Activated B cell treated with CpG ODN at 0.5 μM for 24 hours (primary cell): ENCODE measurements at regions of chr11 and their contacts with region 1.

Region 1: GRCh38 chr11:126268708-126269579 is at the starts of genes FOXRED1 and SRPRA:
- DNase-seq: peak; percentile 99
- ATAC-seq: peak; percentile 98
- H3K4me3 Mint-ChIP-seq: peak within 1 kb of the TSS; percentile 95
- H3K27ac Mint-ChIP-seq: peak within 1 kb of the TSS; percentile 95
- H3K4me1 Mint-ChIP-seq: peaks cover 33% of the 10 kb centered on the region
- H3K27me3 Mint-ChIP-seq: no peaks in the 10 kb centered on the region
- CTCF ChIP-seq: no peak
- total RNA-seq, gene FOXRED1: 39.1 and 44.9 TPM in 2 replicates
- total RNA-seq, gene SRPRA: 121 and 128 TPM in 2 replicates

Region 2: DNA sequence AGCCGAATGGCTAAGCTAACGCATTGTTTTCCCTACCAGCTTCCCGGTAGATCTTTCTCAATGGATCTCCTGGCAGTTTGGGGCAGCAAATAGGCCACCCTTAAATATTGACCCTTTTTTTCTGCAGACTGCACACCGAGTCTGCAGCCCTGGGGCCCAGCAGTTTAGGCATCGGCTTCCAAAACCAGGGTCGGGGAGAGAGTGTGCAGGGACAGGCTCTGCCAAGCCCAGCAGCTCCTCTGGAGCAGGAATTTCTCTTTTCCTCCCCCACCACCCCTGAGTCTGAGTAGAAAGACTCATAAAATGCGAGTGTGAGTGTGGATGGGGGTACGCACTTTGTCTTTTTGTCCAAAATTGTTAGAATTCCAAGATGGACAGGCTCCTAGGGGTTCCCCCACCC is 886.1 kb before region 1 on chr11:
- CTCF ChIA-PET with region 1: no interaction called
- POLR2A ChIA-PET with region 1: interaction called, 11 read pairs
- intact Hi-C with region 1: no loop called
- DNase-seq: no peak
- ATAC-seq: no peak
- H3K4me3 Mint-ChIP-seq: no peak overlapping the region
- H3K27ac Mint-ChIP-seq: no peak overlapping the region
- H3K4me1 Mint-ChIP-seq: no peaks in the 10 kb centered on the region
- H3K27me3 Mint-ChIP-seq: peaks cover 6% of the 10 kb centered on the region
- CTCF ChIP-seq: no peak

Region 3: DNA sequence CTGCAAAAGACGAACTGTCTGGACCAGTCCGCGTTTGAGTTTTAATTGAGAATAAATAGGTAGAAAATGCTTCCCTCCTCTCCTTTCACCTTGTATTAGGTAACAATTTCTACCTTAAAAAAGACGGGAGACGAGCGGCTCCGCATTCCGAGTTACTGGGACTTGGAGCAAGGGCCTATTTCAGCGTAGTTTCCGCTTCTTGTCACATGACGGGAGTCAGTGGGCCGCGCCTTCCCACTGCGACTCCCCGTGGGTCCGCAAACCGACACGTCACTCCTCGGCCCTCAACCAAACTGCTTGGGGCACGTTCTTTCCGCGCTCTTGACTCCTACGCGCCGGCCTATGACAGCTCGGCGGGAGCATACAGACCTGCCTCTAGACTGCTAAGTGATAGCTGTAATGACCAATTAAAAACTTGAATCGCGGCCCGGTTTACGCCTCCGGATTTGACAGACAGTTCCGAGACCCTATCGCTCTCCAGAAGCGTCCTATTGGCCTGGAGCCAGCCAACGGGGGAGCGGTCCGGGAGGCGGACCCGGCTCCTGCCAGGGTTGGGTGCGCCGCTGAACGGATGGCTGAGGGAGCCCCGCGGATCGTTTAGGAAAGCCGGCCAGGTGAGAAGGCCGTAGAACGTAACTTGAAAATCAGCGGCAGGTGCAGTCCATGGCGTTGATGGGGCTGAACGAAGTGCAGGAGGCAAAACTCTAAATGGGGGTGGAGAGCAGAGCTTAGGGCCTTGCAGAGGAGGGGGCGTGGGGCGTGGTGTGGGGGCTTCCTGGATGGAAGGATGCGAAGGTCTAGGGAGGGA is 676.4 kb before region 1 on chr11 and contains the start of gene STT3A:
- CTCF ChIA-PET with region 1: no interaction called
- POLR2A ChIA-PET with region 1: interaction called, 5 read pairs
- intact Hi-C with region 1: loop called (anchors 1 kb)
- DNase-seq: peak; percentile 90
- ATAC-seq: peak; percentile 92
- H3K4me3 Mint-ChIP-seq: peak within 1 kb of the TSS; percentile 95
- H3K27ac Mint-ChIP-seq: peak within 1 kb of the TSS; percentile 99
- H3K4me1 Mint-ChIP-seq: peaks cover 58% of the 10 kb centered on the region
- H3K27me3 Mint-ChIP-seq: no peaks in the 10 kb centered on the region
- CTCF ChIP-seq: no peak
- total RNA-seq, gene STT3A: 79.4 and 86.5 TPM in 2 replicates

Region 4: GRCh38 chr11:125902927-125903710 is 365.8 kb before region 1 on chr11 and contains the start of gene PUS3:
- CTCF ChIA-PET with region 1: no interaction called
- POLR2A ChIA-PET with region 1: no interaction called
- intact Hi-C with region 1: loop called (anchors 2 kb)
- DNase-seq: peak; percentile 77
- ATAC-seq: peak; percentile 96
- H3K4me3 Mint-ChIP-seq: peak within 1 kb of the TSS; percentile 94
- H3K27ac Mint-ChIP-seq: peak within 1 kb of the TSS; percentile 88
- H3K4me1 Mint-ChIP-seq: peaks cover 31% of the 10 kb centered on the region
- H3K27me3 Mint-ChIP-seq: peaks cover 22% of the 10 kb centered on the region
- CTCF ChIP-seq: no peak
- total RNA-seq, gene PUS3: 10.2 and 13.2 TPM in 2 replicates

Region 5: DNA sequence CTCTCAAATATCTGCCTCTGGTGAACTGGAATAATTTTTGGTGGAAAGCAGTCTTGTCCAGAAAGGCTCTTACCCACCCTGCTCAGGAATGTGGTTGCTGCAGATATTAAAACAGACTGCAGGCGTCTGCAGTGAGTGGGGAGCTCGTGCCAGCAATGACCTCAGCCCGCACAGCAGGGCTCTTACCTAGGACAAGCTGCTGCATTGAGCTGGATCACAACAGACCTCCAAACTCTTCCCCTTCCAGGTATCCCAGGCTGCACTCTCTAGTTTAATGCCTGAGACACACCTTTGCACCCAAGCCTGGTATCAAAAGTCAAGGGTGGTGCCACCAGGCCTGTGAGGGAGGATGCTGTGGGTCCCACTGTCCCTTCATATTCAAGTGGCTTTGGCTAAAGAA is 136.6 kb before region 1 on chr11:
- CTCF ChIA-PET with region 1: no interaction called
- POLR2A ChIA-PET with region 1: no interaction called
- intact Hi-C with region 1: no loop called
- DNase-seq: no peak
- ATAC-seq: no peak
- H3K4me3 Mint-ChIP-seq: no peak overlapping the region
- H3K27ac Mint-ChIP-seq: no peak overlapping the region
- H3K4me1 Mint-ChIP-seq: no peaks in the 10 kb centered on the region
- H3K27me3 Mint-ChIP-seq: peaks cover 3% of the 10 kb centered on the region
- CTCF ChIP-seq: no peak

Region 6: DNA sequence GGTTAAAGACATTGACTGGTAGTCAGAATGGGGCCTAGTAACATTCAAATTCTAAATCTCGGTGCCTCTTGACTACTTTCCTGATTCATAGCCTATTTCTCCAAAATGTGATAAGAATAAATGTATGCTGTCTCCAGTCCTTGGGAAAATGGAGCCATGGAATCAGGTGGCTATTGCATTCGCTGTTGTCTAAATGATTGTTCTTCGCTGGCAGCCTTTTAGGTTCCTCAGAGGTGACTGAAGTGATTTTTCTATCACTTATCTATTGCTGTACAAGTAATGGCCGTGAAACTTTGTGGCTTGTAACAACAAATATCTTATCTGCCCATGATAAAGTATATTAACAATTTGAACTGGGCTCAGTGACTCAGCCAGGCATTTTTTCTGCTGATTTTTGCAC is 15.7 kb before region 1 on chr11:
- CTCF ChIA-PET with region 1: no interaction called
- POLR2A ChIA-PET with region 1: no interaction called
- intact Hi-C with region 1: no loop called
- DNase-seq: no peak
- ATAC-seq: no peak
- H3K4me3 Mint-ChIP-seq: no peak overlapping the region
- H3K27ac Mint-ChIP-seq: no peak overlapping the region
- H3K4me1 Mint-ChIP-seq: no peaks in the 10 kb centered on the region
- H3K27me3 Mint-ChIP-seq: no peaks in the 10 kb centered on the region
- CTCF ChIP-seq: no peak

Region 7: GRCh38 chr11:126282736-126283591 is 14.0 kb after region 1 on chr11 and contains the start of gene TIRAP:
- CTCF ChIA-PET with region 1: no interaction called
- POLR2A ChIA-PET with region 1: interaction called, 84 read pairs
- intact Hi-C with region 1: loop called (anchors 1 kb)
- DNase-seq: peak; percentile 68
- ATAC-seq: peak; percentile 79
- H3K4me3 Mint-ChIP-seq: peak within 1 kb of the TSS; percentile 95
- H3K27ac Mint-ChIP-seq: peak within 1 kb of the TSS; percentile 93
- H3K4me1 Mint-ChIP-seq: peaks cover 40% of the 10 kb centered on the region
- H3K27me3 Mint-ChIP-seq: no peaks in the 10 kb centered on the region
- CTCF ChIP-seq: no peak
- total RNA-seq, gene TIRAP: 16.6 and 18.3 TPM in 2 replicates

Region 8: DNA sequence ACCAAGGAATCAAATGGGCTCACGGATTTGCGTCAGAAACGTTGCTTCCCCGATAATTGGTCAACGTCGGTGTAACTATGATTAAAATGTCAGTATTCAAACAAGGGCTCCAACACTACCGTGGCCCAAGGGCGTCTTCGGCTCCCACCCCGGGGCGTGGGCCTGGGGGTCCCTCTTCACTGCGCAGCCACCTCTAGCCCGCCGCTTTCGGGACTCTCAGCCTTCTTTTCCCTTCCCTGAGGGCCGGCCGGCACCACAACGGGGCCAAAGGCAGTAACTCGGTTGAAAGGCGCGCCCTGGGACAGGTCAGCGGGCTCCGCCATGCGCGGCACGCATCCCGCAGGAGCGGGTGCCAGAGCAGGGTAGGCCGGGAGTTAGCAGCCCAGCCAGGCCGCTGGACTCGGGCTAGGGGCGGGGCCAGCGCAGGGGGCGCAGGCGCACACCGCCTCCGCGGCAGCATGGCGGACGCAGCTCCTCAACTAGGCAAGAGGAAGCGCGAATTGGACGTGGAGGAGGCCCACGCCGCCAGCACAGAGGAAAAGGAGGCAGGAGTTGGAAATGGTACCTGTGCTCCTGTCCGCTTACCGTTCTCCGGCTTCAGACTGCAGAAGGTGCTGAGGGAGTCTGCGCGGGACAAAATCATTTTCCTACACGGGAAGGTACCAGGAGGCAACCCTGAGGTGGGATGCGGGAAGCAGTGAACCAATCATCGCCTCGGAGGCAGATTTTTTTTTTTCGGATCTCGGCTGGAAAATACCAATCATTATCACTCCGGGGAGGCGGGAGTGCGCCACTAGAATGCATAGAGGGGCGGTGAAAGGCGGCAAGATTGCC is 34.9 kb after region 1 on chr11 and contains the start of gene DCPS:
- CTCF ChIA-PET with region 1: interaction called, 3 read pairs
- POLR2A ChIA-PET with region 1: interaction called, 10 read pairs
- intact Hi-C with region 1: loop called (anchors 1 kb)
- DNase-seq: peak; percentile 92
- ATAC-seq: peak; percentile 98
- H3K4me3 Mint-ChIP-seq: peak within 1 kb of the TSS; percentile 93
- H3K27ac Mint-ChIP-seq: peak within 1 kb of the TSS; percentile 92
- H3K4me1 Mint-ChIP-seq: peaks cover 38% of the 10 kb centered on the region
- H3K27me3 Mint-ChIP-seq: no peaks in the 10 kb centered on the region
- CTCF ChIP-seq: no peak
- total RNA-seq, gene DCPS: 37.6 and 39.6 TPM in 2 replicates